ENCODE measurements at regions of chr12 and their contacts with region 1.

Region 1: DNA sequence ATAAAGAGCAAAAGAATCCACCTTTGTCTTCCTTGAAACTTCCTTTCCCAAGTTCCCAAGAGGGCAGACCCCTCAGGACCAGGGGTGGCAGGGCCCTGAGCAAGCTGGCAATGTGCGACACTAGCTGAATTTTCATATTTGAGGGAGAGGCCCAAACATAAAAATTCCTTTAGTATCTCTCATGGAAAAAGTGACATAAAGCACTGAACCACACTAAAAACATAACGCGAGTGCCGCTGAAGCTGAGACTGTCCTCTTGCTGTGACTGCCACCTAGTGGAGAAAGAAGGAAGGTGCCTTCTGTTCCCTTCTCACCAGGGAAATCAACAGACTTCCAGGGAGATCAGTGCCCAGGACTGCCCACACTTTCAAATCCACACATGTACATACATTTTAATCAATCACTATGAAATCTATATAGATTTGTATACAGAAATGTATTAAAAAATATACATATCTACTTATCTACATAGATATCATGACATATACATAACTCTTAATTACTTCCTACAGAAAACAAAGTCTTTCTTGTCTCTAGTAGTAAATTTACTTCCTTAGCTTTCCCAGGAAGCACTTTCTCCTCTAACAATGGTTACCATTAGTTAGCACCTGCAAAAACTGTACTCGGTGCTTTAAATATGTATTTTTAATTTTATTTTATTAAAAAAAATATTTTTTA is 53.8 kb downstream of the SSH1 start:
- DNase-seq: peak; percentile 68 to 79 (median 75)
- H3K4me3 ChIP-seq: no peak overlapping the region
- H3K4me3 Mint-ChIP-seq: no peak overlapping the region
- H3K27ac ChIP-seq: no peak overlapping the region
- H3K27ac Mint-ChIP-seq: peak overlapping the region in 3 of 7 donors; percentile 43 to 73 (median 61)
- H3K4me1 ChIP-seq: no peaks in the 10 kb centered on the region
- H3K4me1 Mint-ChIP-seq: peaks cover 0 to 5% (median under 1%) of the 10 kb centered on the region in 4 donors
- H3K27me3 ChIP-seq: no peaks in the 10 kb centered on the region
- H3K27me3 Mint-ChIP-seq: no peaks in the 10 kb centered on the region

Region 2: DNA sequence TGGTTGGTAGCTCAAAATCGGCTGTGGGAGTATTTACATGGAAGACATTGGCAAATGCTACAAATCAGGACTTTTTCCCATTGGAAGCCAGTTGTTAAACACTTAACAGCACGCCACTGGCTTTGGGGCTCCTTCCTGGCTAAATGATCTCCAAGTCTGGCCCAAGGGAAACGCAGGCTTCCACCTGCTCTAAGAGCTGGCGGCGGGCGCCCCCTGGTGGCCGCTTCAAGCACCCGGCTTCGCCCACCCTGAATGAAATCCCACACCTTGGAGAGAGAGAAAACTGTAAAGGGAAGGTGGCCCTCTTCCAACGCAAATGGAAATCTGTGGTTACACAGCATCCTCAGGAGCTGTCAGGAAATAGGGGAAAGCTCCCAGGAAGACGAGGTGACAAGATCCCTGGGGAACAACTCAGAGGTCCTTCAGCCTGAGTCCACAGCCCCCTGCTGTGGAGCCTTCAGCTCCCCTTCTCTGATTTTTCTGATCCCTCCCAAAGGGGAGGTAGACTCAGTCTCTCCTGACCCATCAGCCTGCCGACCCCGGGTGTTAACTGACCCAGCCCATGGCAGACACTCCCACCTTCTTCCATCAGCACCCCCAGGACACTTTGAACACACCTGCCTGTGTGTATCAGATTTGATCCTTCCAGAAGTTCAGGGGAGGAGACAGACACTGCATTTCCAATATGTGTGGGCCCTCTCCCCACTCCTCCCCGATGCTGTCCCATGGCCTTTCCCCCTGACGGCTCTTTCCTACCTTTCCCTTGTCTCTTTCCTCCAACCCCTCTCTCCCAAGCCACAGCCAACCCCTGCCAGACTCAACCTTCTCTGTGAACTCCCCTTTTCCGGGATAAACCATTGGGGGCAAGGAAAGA is 185.3 kb before region 1 on chr12:
- CTCF ChIA-PET with region 1: interaction called, 75 read pairs
- POLR2A ChIA-PET with region 1: interaction called, 22 read pairs
- intact Hi-C with region 1: loop called (anchors 1 kb)
- DNase-seq: peak; percentile 73 to 78 (median 76)
- H3K4me3 ChIP-seq: no peak overlapping the region
- H3K4me3 Mint-ChIP-seq: peak overlapping the region in 6 of 8 donors; percentile 19 to 59 (median 48)
- H3K27ac ChIP-seq: peak overlapping the region; percentile 78
- H3K27ac Mint-ChIP-seq: peak overlapping the region; percentile 87 to 99 (median 95)
- H3K4me1 ChIP-seq: peaks cover 64% of the 10 kb centered on the region
- H3K4me1 Mint-ChIP-seq: peaks cover 47 to 78% (median 62%) of the 10 kb centered on the region in 4 donors
- H3K27me3 ChIP-seq: no peaks in the 10 kb centered on the region
- H3K27me3 Mint-ChIP-seq: no peaks in the 10 kb centered on the region

Region 3: GRCh38 chr12:108664338-108665258 is 139.0 kb before region 1 on chr12:
- CTCF ChIA-PET with region 1: interaction called, 368 read pairs
- POLR2A ChIA-PET with region 1: interaction called, 17 read pairs
- intact Hi-C with region 1: loop called (anchors 1 kb)
- DNase-seq: peak; percentile 79 to 85 (median 81)
- H3K4me3 ChIP-seq: no peak overlapping the region
- H3K4me3 Mint-ChIP-seq: peak overlapping the region in 1 of 8 donors; percentile 20
- H3K27ac ChIP-seq: no peak overlapping the region
- H3K27ac Mint-ChIP-seq: peak overlapping the region; percentile 78 to 93 (median 86)
- H3K4me1 ChIP-seq: peaks cover 14% of the 10 kb centered on the region
- H3K4me1 Mint-ChIP-seq: peaks cover 9 to 10% (median 9%) of the 10 kb centered on the region in 4 donors
- H3K27me3 ChIP-seq: no peaks in the 10 kb centered on the region
- H3K27me3 Mint-ChIP-seq: no peaks in the 10 kb centered on the region

Region 4: GRCh38 chr12:108691175-108691997 is 112.2 kb before region 1 on chr12:
- CTCF ChIA-PET with region 1: interaction called, 21 read pairs
- POLR2A ChIA-PET with region 1: no interaction called
- intact Hi-C with region 1: no loop called
- DNase-seq: peak; percentile 33 to 83 (median 38)
- H3K4me3 ChIP-seq: peak overlapping the region in 1 of 2 donors; percentile 56
- H3K4me3 Mint-ChIP-seq: peak overlapping the region; percentile 48 to 85 (median 78)
- H3K27ac ChIP-seq: peak overlapping the region; percentile 27
- H3K27ac Mint-ChIP-seq: peak overlapping the region; percentile 77 to 90 (median 86)
- H3K4me1 ChIP-seq: peaks cover 46% of the 10 kb centered on the region
- H3K4me1 Mint-ChIP-seq: peaks cover 37 to 66% (median 54%) of the 10 kb centered on the region in 4 donors
- H3K27me3 ChIP-seq: no peaks in the 10 kb centered on the region
- H3K27me3 Mint-ChIP-seq: no peaks in the 10 kb centered on the region

Region 5: GRCh38 chr12:108816652-108817335 is 13.2 kb after region 1 on chr12:
- CTCF ChIA-PET with region 1: interaction called, 14 read pairs
- POLR2A ChIA-PET with region 1: interaction called, 3 read pairs
- intact Hi-C with region 1: no loop called
- DNase-seq: no peak
- H3K4me3 ChIP-seq: no peak overlapping the region
- H3K4me3 Mint-ChIP-seq: no peak overlapping the region
- H3K27ac ChIP-seq: no peak overlapping the region
- H3K27ac Mint-ChIP-seq: no peak overlapping the region
- H3K4me1 ChIP-seq: no peaks in the 10 kb centered on the region
- H3K4me1 Mint-ChIP-seq: peaks cover 0 to 1% (median 0%) of the 10 kb centered on the region in 4 donors
- H3K27me3 ChIP-seq: no peaks in the 10 kb centered on the region
- H3K27me3 Mint-ChIP-seq: no peaks in the 10 kb centered on the region

Region 6: GRCh38 chr12:108856428-108857157 is 53.0 kb after region 1 on chr12:
- CTCF ChIA-PET with region 1: no interaction called
- POLR2A ChIA-PET with region 1: no interaction called
- intact Hi-C with region 1: loop called (anchors 5 kb)
- DNase-seq: peak; percentile 52 to 87 (median 59)
- H3K4me3 ChIP-seq: peak overlapping the region; percentile 54 to 74
- H3K4me3 Mint-ChIP-seq: peak overlapping the region; percentile 93 to 98 (median 96)
- H3K27ac ChIP-seq: peak overlapping the region; percentile 67
- H3K27ac Mint-ChIP-seq: peak overlapping the region; percentile 83 to 99 (median 96)
- H3K4me1 ChIP-seq: peaks cover 30% of the 10 kb centered on the region
- H3K4me1 Mint-ChIP-seq: peaks cover 30 to 45% (median 38%) of the 10 kb centered on the region in 4 donors
- H3K27me3 ChIP-seq: no peaks in the 10 kb centered on the region
- H3K27me3 Mint-ChIP-seq: no peaks in the 10 kb centered on the region

Region 7: GRCh38 chr12:109093022-109093918 is 289.7 kb after region 1 on chr12 and contains the start of gene ALKBH2:
- CTCF ChIA-PET with region 1: interaction called, 9 read pairs
- POLR2A ChIA-PET with region 1: no interaction called
- intact Hi-C with region 1: loop called (anchors 1 kb)
- DNase-seq: peak; percentile 93 to 98 (median 95)
- H3K4me3 ChIP-seq: peak within 1 kb of the TSS; percentile 62 to 75
- H3K4me3 Mint-ChIP-seq: peak within 1 kb of the TSS; percentile 84 to 91 (median 86)
- H3K27ac ChIP-seq: peak within 1 kb of the TSS; percentile 60
- H3K27ac Mint-ChIP-seq: peak within 1 kb of the TSS; percentile 86 to 97 (median 95)
- H3K4me1 ChIP-seq: peaks cover 27% of the 10 kb centered on the region
- H3K4me1 Mint-ChIP-seq: peaks cover 21 to 56% (median 34%) of the 10 kb centered on the region in 4 donors
- H3K27me3 ChIP-seq: no peaks in the 10 kb centered on the region
- H3K27me3 Mint-ChIP-seq: no peaks in the 10 kb centered on the region
- total RNA-seq, gene ALKBH2: 12.9 to 14.4 TPM

Region 8: GRCh38 chr12:109377139-109377685 is 573.6 kb after region 1 on chr12:
- CTCF ChIA-PET with region 1: no interaction called
- POLR2A ChIA-PET with region 1: no interaction called
- intact Hi-C with region 1: no loop called
- DNase-seq: no peak
- H3K4me3 ChIP-seq: no peak overlapping the region
- H3K4me3 Mint-ChIP-seq: no peak overlapping the region
- H3K27ac ChIP-seq: no peak overlapping the region
- H3K27ac Mint-ChIP-seq: no peak overlapping the region
- H3K4me1 ChIP-seq: no peaks in the 10 kb centered on the region
- H3K4me1 Mint-ChIP-seq: no peaks in the 10 kb centered on the region
- H3K27me3 ChIP-seq: no peaks in the 10 kb centered on the region
- H3K27me3 Mint-ChIP-seq: peaks cover 14 to 25% of the 10 kb centered on the region in 2 donors